A549 (cell line): ENCODE measurements at regions of chr12 and their contacts with region 1.

Region 1: DNA sequence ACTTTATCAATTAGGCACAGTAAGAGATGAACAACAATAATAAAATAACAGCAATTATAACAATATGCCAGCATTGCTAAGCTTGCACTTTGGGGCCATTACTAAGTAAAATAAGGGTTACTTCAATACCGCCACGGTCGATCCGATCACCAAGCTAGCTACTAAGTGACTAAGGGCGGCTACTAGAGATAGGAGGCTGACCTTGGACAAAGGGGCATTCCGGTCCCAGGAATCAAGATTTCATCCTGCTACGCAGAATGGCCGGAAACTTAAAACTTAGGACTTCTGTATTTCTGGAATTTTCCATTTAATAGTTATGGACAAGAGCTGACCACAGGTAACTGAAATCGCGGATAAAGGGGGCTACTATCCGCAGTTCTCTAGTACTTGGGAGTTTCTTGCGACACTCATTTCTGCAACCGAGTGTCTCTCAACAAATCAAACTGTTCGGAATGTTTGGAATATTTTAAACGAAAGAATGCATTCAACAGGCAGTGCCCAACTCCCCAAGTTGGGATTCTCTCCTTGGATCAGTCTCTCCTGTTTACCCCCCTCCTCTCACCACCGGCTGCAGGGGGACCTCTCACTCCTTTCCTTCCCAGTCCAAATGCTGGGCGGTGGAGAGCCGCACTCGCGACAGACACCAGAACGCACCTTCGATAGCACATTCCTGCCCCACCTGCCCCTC is 650 bp downstream of the HEBP1 start:
- DNase-seq: peak in 1 of 2 experiments; percentile 37
- ATAC-seq: peak; percentile 30 to 31
- H3K4me3 ChIP-seq: peak overlapping the region; percentile 88
- H3K27ac ChIP-seq: peak overlapping the region; percentile 81 to 96
- H3K4me1 ChIP-seq: peaks cover 15% of the 10 kb centered on the region
- CTCF ChIP-seq: no peak
- EP300 ChIP-seq: no peak
- POLR2A ChIP-seq: no peak
- RAD21 ChIP-seq: no peak

Region 2: DNA sequence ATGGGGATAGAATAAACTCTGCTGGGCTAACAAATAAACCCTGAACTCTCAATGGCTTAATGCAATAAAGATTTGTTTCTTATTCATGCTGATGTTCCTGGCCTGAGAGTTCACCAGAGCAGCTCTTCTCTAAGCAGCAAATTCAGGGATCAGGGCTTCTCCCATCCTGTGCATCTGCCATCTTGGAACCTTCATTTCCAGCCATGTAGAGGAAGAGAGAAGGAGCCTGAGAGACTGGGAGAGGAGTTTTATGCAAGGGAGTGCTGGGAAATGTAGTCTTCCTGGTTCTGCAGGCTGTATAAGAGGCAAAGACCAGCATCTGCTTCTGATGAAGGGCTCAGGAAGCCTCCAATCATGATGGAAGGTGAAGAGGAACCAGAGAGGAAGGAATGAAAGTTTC is 234.6 kb before region 1 on chr12:
- CTCF ChIA-PET with region 1: no interaction called
- POLR2A ChIA-PET with region 1: no interaction called
- DNase-seq: no peak
- ATAC-seq: no peak
- H3K4me3 ChIP-seq: no peak overlapping the region
- H3K27ac ChIP-seq: no peak overlapping the region
- H3K4me1 ChIP-seq: no peaks in the 10 kb centered on the region
- CTCF ChIP-seq: no peak
- EP300 ChIP-seq: no peak
- POLR2A ChIP-seq: no peak
- RAD21 ChIP-seq: no peak

Region 3: GRCh38 chr12:12925388-12925787 is 74.0 kb before region 1 on chr12:
- CTCF ChIA-PET with region 1: no interaction called
- POLR2A ChIA-PET with region 1: no interaction called
- DNase-seq: no peak
- ATAC-seq: no peak
- H3K4me3 ChIP-seq: no peak overlapping the region
- H3K27ac ChIP-seq: peak overlapping the region in 1 of 2 experiments; percentile 86; a peak in 3 of 6 replicates
- H3K4me1 ChIP-seq: peaks cover 38% of the 10 kb centered on the region
- CTCF ChIP-seq: no peak
- EP300 ChIP-seq: no peak
- POLR2A ChIP-seq: no peak
- RAD21 ChIP-seq: no peak

Region 4: DNA sequence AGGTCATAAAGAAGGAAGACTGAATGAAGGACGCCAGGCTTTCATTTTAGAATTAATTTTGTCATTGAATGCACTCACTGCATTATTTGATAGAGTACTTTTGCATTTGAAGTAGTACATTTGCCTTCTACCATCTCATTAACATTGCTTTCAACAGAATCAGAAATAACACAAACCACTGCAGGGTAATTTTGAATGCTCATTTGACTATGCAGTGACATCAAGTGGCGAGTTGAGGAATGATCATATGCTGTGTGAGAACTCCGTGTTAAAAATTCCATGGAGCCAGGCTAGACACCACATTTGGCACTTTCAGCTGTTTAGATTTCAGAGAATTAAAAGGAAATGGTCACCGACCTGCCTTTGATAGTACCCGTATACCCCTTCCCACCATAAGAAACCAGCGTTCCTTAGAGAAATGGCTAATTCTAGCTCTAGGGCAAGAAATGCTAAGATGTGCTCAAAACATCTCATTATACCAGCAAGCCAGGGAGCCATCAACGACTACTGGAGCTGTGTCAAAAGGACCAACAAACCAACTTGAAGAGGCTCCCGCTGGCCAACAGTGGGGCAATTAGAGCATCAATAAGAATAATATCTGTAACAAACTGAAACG is 15.9 kb before region 1 on chr12:
- CTCF ChIA-PET with region 1: interaction called, 17 read pairs
- POLR2A ChIA-PET with region 1: no interaction called
- DNase-seq: peak; percentile 61 to 73
- ATAC-seq: peak; percentile 65 to 66; a peak in 5 of 6 replicates
- H3K4me3 ChIP-seq: no peak overlapping the region
- H3K27ac ChIP-seq: no peak overlapping the region
- H3K4me1 ChIP-seq: peaks cover 30% of the 10 kb centered on the region
- CTCF ChIP-seq: peak; percentile 86
- EP300 ChIP-seq: no peak
- POLR2A ChIP-seq: no peak
- RAD21 ChIP-seq: peak; percentile 84 to 91

Region 5: GRCh38 chr12:13250416-13250815 is 251.0 kb after region 1 on chr12:
- CTCF ChIA-PET with region 1: no interaction called
- POLR2A ChIA-PET with region 1: no interaction called
- DNase-seq: peak in 1 of 2 experiments; percentile 33
- ATAC-seq: peak; percentile 47 to 70; a peak in 4 of 6 replicates
- H3K4me3 ChIP-seq: no peak overlapping the region
- H3K27ac ChIP-seq: no peak overlapping the region
- H3K4me1 ChIP-seq: no peaks in the 10 kb centered on the region; the same call in 1 of the 3 replicates
- CTCF ChIP-seq: no peak
- EP300 ChIP-seq: no peak
- POLR2A ChIP-seq: no peak
- RAD21 ChIP-seq: no peak